Activated CD8-positive, alpha-beta T cell treated with anti-CD3 and anti-CD28 coated beads, Interleukin-2, amount 10 ng/mL, durations not matched to agents 7 days and 5 days (primary cell): ENCODE measurements at regions of chr6 and their contacts with region 1.

Region 1: DNA sequence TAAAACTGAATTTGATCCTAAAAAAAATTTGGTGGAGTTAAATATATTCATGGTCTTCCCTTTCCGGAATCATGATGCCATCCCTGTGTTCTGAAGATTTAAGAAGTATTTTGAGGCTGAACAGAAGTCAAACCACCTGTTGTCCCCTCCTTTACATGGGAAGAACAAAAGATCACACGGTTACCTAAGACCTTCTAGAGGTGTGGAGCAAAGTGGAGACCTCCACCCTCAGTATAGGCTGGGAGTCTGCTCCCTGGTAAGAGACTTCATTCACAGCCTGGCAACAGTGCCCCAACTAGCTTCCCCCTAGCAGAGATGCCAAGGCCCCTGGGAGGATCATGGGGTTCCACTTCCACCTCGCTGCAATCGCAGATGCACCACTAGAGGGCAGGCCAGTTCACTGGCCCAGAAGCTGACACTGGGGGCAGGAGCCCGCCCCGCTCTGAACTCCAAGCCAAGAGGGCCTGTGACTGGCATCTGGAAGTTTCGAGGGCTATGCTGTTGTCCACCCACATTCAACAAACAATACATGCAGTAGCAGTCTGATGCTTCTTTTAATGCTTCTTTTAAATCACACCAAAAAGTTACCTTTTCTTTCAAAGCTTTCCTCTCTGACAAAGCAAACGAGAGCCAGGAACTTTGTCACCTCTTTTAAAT is 19.5 kb upstream of the UBE2J1 start:
- DNase-seq: peak; percentile 87
- ATAC-seq: peak; percentile 81
- H3K4me3 Mint-ChIP-seq: peak overlapping the region; percentile 5
- H3K27ac Mint-ChIP-seq: peak overlapping the region; percentile 61
- H3K4me1 Mint-ChIP-seq: peaks cover 41% of the 10 kb centered on the region
- H3K27me3 Mint-ChIP-seq: peaks cover 8% of the 10 kb centered on the region

Region 2: DNA sequence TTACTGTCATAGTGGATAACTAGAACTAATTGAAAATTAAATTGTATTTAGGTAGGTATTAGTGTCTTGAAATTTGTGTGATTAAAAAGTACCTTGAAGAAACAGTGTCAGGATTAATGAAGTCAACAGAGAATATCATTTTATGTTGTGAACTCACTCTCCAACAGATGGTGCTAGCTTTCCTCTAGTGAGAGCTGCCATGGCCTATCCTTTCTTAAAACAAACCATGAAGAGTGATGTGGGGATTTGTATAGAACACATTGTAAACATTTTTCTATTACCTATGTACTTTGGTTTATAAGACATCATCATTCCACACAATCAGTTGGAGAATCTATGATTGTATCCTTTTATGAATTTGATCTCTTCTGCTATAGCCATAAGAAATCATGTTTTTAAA is 249.4 kb before region 1 on chr6:
- CTCF ChIA-PET with region 1: interaction called, 11 read pairs
- POLR2A ChIA-PET with region 1: no interaction called
- DNase-seq: no peak
- ATAC-seq: no peak
- H3K4me3 Mint-ChIP-seq: no peak overlapping the region
- H3K27ac Mint-ChIP-seq: no peak overlapping the region
- H3K4me1 Mint-ChIP-seq: peaks cover 2% of the 10 kb centered on the region
- H3K27me3 Mint-ChIP-seq: peaks cover 17% of the 10 kb centered on the region

Region 3: GRCh38 chr6:89242574-89243330 is 129.2 kb before region 1 on chr6:
- CTCF ChIA-PET with region 1: interaction called, 12 read pairs
- POLR2A ChIA-PET with region 1: no interaction called
- DNase-seq: peak; percentile 25
- ATAC-seq: no peak
- H3K4me3 Mint-ChIP-seq: no peak overlapping the region
- H3K27ac Mint-ChIP-seq: no peak overlapping the region
- H3K4me1 Mint-ChIP-seq: peaks cover 33% of the 10 kb centered on the region
- H3K27me3 Mint-ChIP-seq: peaks cover 26% of the 10 kb centered on the region

Region 4: GRCh38 chr6:89352278-89353117 is 19.5 kb before region 1 on chr6 and contains the start of gene UBE2J1:
- CTCF ChIA-PET with region 1: interaction called, 135 read pairs
- POLR2A ChIA-PET with region 1: interaction called, 9 read pairs
- DNase-seq: peak; percentile 77
- ATAC-seq: peak; percentile 88
- H3K4me3 Mint-ChIP-seq: peak within 1 kb of the TSS; percentile 98
- H3K27ac Mint-ChIP-seq: peak within 1 kb of the TSS; percentile 91
- H3K4me1 Mint-ChIP-seq: peaks cover 77% of the 10 kb centered on the region
- H3K27me3 Mint-ChIP-seq: no peaks in the 10 kb centered on the region
- total RNA-seq, gene UBE2J1: 30.1 to 30.3 TPM

Region 5: GRCh38 chr6:89387516-89388222 is 15.7 kb after region 1 on chr6:
- CTCF ChIA-PET with region 1: interaction called, 12 read pairs
- POLR2A ChIA-PET with region 1: no interaction called
- DNase-seq: no peak
- ATAC-seq: no peak
- H3K4me3 Mint-ChIP-seq: no peak overlapping the region
- H3K27ac Mint-ChIP-seq: no peak overlapping the region
- H3K4me1 Mint-ChIP-seq: peaks cover 4% of the 10 kb centered on the region
- H3K27me3 Mint-ChIP-seq: peaks cover 8% of the 10 kb centered on the region

Region 6: DNA sequence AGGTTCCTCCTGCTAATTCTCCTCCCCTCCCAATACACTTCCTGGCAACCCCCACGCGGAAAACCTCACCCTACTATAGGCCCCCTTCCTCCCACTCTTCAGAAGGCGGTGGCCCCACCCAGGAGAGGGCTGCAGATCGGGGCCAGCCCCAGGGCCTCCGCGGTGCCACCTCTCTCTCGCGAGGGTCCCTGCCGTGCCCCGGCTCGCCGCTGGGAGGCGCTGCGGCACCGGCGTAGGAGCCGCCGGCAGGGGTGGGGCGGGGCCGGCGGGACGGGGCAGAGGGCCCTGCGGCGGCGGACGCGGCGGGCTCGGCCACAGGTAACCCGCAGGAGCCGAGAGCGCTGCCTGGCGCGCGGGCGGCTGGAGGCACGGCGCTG is 60.9 kb after region 1 on chr6 and contains the start of gene ANKRD6:
- CTCF ChIA-PET with region 1: interaction called, 65 read pairs
- POLR2A ChIA-PET with region 1: no interaction called
- DNase-seq: peak; percentile 82
- ATAC-seq: peak; percentile 94
- H3K4me3 Mint-ChIP-seq: peak within 1 kb of the TSS; percentile 79
- H3K27ac Mint-ChIP-seq: peak within 1 kb of the TSS; percentile 70
- H3K4me1 Mint-ChIP-seq: peaks cover 24% of the 10 kb centered on the region
- H3K27me3 Mint-ChIP-seq: peaks cover 36% of the 10 kb centered on the region
- total RNA-seq, gene ANKRD6: 9.1 TPM

Region 7: GRCh38 chr6:89623749-89624148 is 251.8 kb after region 1 on chr6:
- CTCF ChIA-PET with region 1: no interaction called
- POLR2A ChIA-PET with region 1: no interaction called
- DNase-seq: no peak
- ATAC-seq: no peak
- H3K4me3 Mint-ChIP-seq: no peak overlapping the region
- H3K27ac Mint-ChIP-seq: no peak overlapping the region
- H3K4me1 Mint-ChIP-seq: no peaks in the 10 kb centered on the region
- H3K27me3 Mint-ChIP-seq: no peaks in the 10 kb centered on the region

Region 8: GRCh38 chr6:89638320-89639195 is 266.6 kb after region 1 on chr6 and contains the start of gene LYRM2:
- CTCF ChIA-PET with region 1: interaction called, 15 read pairs
- POLR2A ChIA-PET with region 1: interaction called, 3 read pairs
- DNase-seq: peak; percentile 94
- ATAC-seq: peak; percentile 97
- H3K4me3 Mint-ChIP-seq: peak within 1 kb of the TSS; percentile 93
- H3K27ac Mint-ChIP-seq: peak within 1 kb of the TSS; percentile 98
- H3K4me1 Mint-ChIP-seq: peaks cover 32% of the 10 kb centered on the region
- H3K27me3 Mint-ChIP-seq: no peaks in the 10 kb centered on the region
- total RNA-seq, gene LYRM2: 29.2 to 29.5 TPM